ENCODE measurements at regions of chrX and their contacts with region 1.

Region 1: DNA sequence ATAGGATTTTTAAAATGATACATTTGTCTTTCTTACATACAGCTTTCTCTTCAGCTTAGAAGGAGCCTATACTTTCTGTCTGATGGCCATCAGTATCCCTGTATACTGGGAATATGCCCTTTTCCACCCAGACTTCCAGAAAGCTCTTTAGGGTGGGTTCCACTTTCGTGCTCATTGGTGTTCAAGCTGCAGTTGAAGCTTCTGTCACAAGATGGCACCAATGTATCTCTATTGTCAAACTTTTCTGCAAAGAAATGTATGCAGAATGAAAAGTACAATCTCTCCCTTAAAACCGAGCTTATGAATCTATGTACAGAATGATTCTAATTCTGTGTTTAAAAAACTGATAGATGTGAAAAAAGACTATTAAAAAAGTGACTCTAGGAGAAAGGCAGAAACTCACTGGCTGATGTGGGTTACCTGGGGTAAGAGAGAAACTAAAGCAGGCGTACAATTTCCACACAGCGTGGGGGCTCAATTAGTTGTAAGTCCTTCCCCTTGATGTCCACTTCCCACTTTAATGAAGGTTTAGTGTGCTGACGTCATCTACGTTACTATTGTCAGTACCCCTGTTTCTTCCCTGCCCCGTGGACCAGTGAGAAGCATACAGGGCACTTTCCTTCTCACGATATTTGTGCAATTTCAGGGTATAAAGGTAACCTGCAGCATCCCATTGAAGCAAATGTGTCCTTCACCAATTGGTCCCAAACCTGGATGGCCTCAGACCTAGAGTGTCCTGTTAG is 57.3 kb upstream of the TCEAL2 start:
- DNase-seq: no peak
- H3K4me3 ChIP-seq: no peak overlapping the region
- H3K27ac ChIP-seq: no peak overlapping the region
- H3K4me1 ChIP-seq: no peaks in the 10 kb centered on the region
- H3K27me3 ChIP-seq: no peaks in the 10 kb centered on the region
- CTCF ChIP-seq: peak in 3 of 4 experiments; percentile 9 to 37 (median 21)
- EP300 ChIP-seq: no peak
- POLR2A ChIP-seq: no peak

Region 2: DNA sequence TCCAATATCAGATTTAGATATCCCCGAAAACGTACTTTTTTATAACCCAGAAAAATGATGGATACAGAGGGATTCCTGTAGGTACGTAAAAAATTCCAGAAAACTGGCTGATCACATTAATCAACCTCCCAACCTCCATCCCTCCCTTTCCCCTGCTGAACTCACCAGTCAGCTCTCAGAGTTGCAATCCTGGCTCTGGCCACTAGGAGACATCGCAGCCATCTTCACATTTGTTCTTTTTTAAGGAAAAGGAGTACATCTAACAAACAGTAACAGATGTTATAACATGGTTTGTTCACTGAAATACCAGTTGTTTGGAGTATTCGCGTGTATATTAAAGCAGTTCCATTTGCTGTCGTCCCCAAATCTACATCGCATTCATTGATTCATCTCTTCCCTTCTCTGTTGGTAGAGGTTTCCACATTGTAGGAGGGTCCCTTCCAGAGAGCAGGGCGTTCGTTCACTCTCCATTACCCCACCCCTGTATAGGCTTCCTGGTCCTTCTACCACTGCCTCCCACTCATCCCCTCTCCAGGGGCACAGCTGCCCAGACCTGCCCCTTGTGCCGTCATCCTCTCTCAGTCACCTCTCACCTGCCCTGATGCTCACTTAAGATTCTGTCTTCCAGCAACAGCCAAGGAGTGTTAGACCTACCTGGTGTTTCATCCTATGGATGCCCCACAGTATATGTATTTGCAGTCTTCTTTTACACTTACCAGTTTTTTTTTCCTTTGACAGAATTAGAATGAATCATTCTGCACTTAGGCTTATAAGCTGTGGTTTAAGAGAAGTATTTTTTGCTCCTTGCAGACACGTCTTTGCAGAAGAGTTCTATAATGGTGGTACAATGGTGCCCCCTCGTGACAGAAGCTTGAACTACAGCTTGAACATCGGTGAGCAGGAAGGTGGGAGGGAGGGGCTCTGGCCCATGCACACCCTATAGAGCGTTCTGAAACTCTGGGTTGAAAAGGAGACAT is 832.1 kb after region 1 on chrX:
- intact Hi-C with region 1: loop called (anchors 5 kb)
- DNase-seq: peak; percentile 66
- H3K4me3 ChIP-seq: no peak overlapping the region
- H3K27ac ChIP-seq: no peak overlapping the region
- H3K4me1 ChIP-seq: no peaks in the 10 kb centered on the region
- H3K27me3 ChIP-seq: no peaks in the 10 kb centered on the region
- CTCF ChIP-seq: peak in 3 of 4 experiments; percentile 10 to 47 (median 28)
- EP300 ChIP-seq: no peak
- POLR2A ChIP-seq: no peak

Measured in sigmoid colon (tissue), 7 donors.